IMR-90 (cell line): ENCODE measurements at regions of chr5 and their contacts with region 1.

Region 1: GRCh38 chr5:149526845-149527580 is 24.2 kb downstream of the CSNK1A1 start:
- DNase-seq: no peak
- ATAC-seq: no peak
- H3K4me3 ChIP-seq: no peak overlapping the region
- H3K27ac ChIP-seq: no peak overlapping the region
- H3K4me1 ChIP-seq: peaks cover 7% of the 10 kb centered on the region
- H3K27me3 ChIP-seq: no peaks in the 10 kb centered on the region
- CTCF ChIP-seq: no peak
- POLR2A ChIP-seq: no peak
- RAD21 ChIP-seq: no peak

Region 2: GRCh38 chr5:149608526-149608880 is 81.5 kb after region 1 on chr5:
- CTCF ChIA-PET with region 1: no interaction called
- POLR2A ChIA-PET with region 1: interaction called, 13 read pairs
- dilution Hi-C with region 1: no loop called
- in situ Hi-C with region 1: no loop called
- intact Hi-C with region 1: no loop called
- DNase-seq: no peak
- ATAC-seq: no peak
- H3K4me3 ChIP-seq: no peak overlapping the region
- H3K27ac ChIP-seq: no peak overlapping the region
- H3K4me1 ChIP-seq: peaks cover 8% of the 10 kb centered on the region
- H3K27me3 ChIP-seq: no peaks in the 10 kb centered on the region
- CTCF ChIP-seq: no peak
- POLR2A ChIP-seq: no peak
- RAD21 ChIP-seq: no peak

Region 3: DNA sequence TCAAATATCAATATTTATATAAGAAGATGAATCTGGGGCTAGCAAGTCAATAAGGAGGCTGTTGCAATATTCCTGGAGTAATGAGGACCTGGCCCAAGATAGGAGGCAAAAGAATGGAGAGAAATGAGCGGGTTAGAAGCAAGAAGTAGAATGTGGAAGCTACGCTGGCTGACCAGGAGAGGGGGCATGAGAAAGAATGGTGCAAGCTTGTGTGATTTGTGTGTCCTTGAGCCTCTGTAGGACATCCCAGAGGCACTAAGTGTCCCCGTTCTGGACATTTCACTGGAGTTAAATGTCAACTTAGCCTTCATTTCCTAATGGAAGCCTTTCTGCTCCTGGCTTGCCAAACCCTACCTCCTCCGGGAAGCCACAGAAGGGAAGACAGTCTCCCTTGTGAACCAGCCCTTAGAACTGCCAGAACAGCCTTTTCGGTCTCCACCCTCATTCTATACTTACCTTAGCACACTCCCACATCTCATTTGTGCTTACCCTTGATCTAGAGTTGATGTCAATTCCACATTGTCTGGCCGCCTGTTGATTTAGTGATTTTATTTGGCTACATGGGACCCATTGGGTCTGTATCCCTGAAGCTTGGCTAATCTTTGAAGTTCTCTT is 424.2 kb after region 1 on chr5:
- CTCF ChIA-PET with region 1: no interaction called
- POLR2A ChIA-PET with region 1: no interaction called
- dilution Hi-C with region 1: no loop called
- in situ Hi-C with region 1: no loop called
- intact Hi-C with region 1: no loop called
- DNase-seq: no peak
- ATAC-seq: no peak
- H3K4me3 ChIP-seq: no peak overlapping the region
- H3K27ac ChIP-seq: no peak overlapping the region
- H3K4me1 ChIP-seq: no peaks in the 10 kb centered on the region
- H3K27me3 ChIP-seq: peaks cover 33% of the 10 kb centered on the region
- CTCF ChIP-seq: no peak
- POLR2A ChIP-seq: no peak
- RAD21 ChIP-seq: no peak